BJ (cell line): ENCODE measurements at regions of chr12 and their contacts with region 1.

Region 1: DNA sequence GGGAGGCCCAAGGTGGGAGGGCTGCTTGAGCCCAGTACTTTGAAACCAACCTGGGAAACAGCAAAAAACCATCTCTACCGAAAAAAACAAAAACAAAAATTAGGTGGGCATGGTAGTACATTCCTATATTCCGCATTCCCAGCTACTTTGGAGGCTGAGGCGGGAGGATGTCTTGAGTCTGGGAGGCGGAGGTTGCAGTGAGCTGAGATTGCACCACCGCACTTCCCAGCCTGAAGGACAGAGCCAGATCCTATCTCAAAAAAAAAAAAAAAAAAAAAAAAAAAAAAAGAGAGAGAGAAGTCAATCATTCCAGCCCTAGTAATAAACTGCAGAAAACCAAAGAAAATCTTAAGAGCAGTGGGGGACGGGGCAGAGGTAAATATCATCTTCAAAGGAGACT is 46.0 kb downstream of the ANAPC7 start:
- DNase-seq: no peak
- H3K4me3 ChIP-seq: no peak overlapping the region
- H3K27me3 ChIP-seq: no peaks in the 10 kb centered on the region
- CTCF ChIP-seq: no peak

Region 2: DNA sequence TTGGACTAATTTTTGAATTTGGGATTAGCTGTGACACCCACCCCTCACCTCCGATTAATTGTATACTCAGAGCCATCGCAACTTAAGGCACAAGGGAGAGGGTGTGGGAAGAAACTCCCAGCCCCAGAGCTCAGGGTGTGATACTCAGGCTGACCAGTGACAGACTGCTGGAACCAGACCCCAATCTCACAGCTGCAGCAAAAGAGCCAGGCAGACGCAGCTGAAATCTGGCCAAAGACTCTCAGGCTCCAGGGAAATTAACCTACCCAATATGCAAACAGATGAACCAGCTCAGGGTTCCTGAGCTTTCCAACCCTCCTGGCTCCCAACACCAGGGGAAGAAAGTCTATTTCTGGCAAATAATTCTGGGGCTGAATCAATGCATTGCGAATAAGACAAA is 15.5 kb after region 1 on chr12:
- CTCF ChIA-PET with region 1: interaction called, 15 read pairs
- POLR2A ChIA-PET with region 1: interaction called, 5 read pairs
- DNase-seq: no peak
- H3K4me3 ChIP-seq: no peak overlapping the region
- H3K27me3 ChIP-seq: no peaks in the 10 kb centered on the region
- CTCF ChIP-seq: no peak